Dorsolateral prefrontal cortex (tissue), 120 donors: ENCODE measurements at regions of chr13 and their contacts with region 1.

Region 1: DNA sequence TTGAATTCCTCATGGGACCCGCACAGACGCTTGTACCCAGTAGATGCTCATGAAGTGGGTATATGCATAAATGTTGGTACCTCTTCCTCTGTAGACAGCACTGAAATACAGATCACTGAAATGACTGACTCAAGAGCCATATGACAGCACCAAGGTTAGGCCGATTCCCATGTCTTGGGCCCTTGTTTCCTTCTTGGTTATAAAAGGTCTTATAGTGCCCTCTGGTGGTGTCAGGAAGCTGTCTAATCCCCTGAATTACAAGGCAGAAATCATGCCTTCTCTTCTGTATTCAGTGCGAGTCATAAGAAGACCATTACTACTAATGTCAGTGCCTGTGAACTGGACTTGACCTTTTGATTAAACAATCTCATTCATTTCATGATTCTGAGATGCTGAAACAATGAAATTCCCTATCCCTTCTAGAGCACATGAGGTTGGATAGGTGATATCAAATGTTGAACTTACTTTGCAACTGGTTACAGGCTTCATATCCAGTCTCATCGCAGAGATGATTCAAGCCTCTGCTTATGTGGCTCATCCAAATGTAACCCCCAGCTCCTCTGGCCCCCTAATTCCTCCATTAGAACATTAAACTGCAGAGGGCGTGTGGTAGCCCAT is 59.7 kb downstream of the SPATA13 start:
- DNase-seq: peak in 2 of 10 donors; percentile 47 to 74
- H3K4me3 ChIP-seq: no peak overlapping the region
- H3K27ac ChIP-seq: peak overlapping the region; percentile 7 to 93 (median 81)
- H3K27me3 ChIP-seq: no peaks in the 10 kb centered on the region
- CTCF ChIP-seq: peak; percentile 74 to 95 (median 87)

Region 2: GRCh38 chr13:23921451-23921888 is 298.7 kb before region 1 on chr13:
- intact Hi-C with region 1: loop called (anchors 5 kb)
- DNase-seq: no peak
- H3K4me3 ChIP-seq: no peak overlapping the region
- H3K27ac ChIP-seq: no peak overlapping the region
- H3K27me3 ChIP-seq: peaks cover 0 to 7% (median 0%) of the 10 kb centered on the region in 45 donors
- CTCF ChIP-seq: peak; percentile 60 to 95 (median 83)

Region 3: DNA sequence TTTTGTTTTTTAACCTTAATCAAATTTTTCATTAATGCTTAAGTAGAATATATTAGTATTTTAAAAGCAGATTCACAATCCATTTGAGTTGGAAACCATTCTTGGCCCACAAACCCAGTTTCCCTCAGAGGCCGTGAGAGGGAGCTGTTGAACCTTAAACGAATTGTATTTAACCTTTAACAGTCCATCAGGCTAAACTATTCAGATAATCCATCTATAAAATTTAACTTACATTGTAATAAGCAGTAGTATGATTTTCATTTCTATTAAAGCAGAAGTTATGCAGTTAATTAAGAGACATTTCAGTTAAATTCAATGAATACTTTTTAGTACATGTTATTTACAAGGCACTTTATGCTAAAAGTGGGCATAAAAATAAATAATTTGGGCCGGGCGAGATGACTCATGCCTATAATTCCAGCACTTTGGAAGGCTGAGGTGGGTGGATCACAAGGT is 199.8 kb before region 1 on chr13:
- intact Hi-C with region 1: loop called (anchors 2 kb)
- DNase-seq: peak in 3 of 10 donors; percentile 68 to 81 (median 70)
- H3K4me3 ChIP-seq: no peak overlapping the region
- H3K27ac ChIP-seq: peak overlapping the region in 9 of 59 donors; percentile 16 to 72 (median 46)
- H3K27me3 ChIP-seq: no peaks in the 10 kb centered on the region
- CTCF ChIP-seq: peak; percentile 55 to 96 (median 86)

Region 4: GRCh38 chr13:24053519-24054251 is 166.5 kb before region 1 on chr13:
- intact Hi-C with region 1: loop called (anchors 2 to 5 kb)
- DNase-seq: peak in 8 of 10 donors; percentile 38 to 80 (median 72)
- H3K4me3 ChIP-seq: peak overlapping the region in 18 of 59 donors; percentile 5 to 46 (median 33)
- H3K27ac ChIP-seq: peak overlapping the region in 57 of 59 donors; percentile 9 to 95 (median 86)
- H3K27me3 ChIP-seq: no peaks in the 10 kb centered on the region
- CTCF ChIP-seq: peak; percentile 55 to 89 (median 78)

Region 5: DNA sequence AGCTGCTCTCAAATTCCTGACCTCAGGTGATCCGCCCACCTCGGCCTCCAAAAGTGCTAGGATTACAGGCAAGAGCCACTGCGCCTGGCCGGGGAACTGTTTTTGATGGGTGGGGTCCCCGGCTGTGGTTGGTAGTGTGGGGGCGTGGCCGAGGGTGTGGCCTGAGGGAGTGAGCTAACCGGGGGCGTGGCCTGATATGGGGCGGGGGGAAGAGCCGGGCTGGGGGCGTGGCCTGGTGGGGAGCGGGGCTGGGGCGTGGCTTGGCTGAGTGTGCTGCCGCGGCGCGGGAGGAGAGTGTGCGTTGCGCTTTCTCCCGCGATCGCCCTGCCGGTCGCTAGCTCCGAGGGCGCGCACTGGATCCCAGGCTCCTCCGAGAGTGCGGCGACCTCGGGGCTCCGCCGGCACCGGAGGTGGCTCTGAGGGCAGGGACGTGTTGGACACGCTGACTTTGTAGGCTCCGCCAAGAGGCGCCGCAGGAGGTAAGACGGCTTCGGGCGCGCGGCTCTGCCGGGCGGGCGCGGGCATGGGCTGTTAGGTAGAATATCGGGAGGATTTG is 59.7 kb before region 1 on chr13 and contains the start of gene SPATA13:
- intact Hi-C with region 1: loop called (anchors 2 to 5 kb)
- DNase-seq: peak; percentile 81 to 94 (median 90)
- H3K4me3 ChIP-seq: peak within 1 kb of the TSS; percentile 56 to 99 (median 86)
- H3K27ac ChIP-seq: peak within 1 kb of the TSS in 57 of 59 donors; percentile 8 to 89 (median 76)
- H3K27me3 ChIP-seq: peaks cover 0 to 8% (median 0%) of the 10 kb centered on the region in 45 donors
- CTCF ChIP-seq: peak in 13 of 56 donors; percentile 7 to 30 (median 10)
- total RNA-seq, gene SPATA13: 12.1 to 112 (median 36.5) TPM